ENCODE measurements at regions of chr2 and their contacts with region 1.

Region 1: DNA sequence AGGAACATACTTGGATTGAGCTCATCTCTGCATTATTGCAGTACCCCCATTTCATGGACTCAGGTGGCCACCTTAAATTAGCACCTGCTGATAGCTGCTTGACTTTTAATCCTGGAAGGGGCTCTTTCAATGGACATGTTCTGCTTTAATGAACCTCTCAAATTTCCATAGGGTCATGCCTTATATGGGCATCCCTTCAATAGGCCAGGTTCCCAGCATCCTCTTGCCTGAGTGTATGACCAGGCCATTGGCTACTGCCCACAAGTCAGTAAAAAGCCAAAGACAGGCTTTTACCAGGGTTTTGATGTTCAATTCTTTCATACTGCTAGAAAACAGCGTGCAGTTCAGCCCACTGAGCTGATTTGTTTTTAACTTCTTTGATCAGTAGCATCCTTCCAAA is 115.6 kb downstream of the SLC4A10 start:
- DNase-seq: no peak
- ATAC-seq: no peak

Region 2: GRCh38 chr2:162196638-162197037 is 456.9 kb after region 1 on chr2:
- intact Hi-C with region 1: loop called (anchors 5 kb)
- DNase-seq: no peak
- ATAC-seq: no peak

Measured in Right ventricle myocardium inferior (tissue), 1 donor.